Naive thymus-derived CD4-positive, alpha-beta T cell (primary cell): ENCODE measurements at regions of chr1 and their contacts with region 1.

Region 1: DNA sequence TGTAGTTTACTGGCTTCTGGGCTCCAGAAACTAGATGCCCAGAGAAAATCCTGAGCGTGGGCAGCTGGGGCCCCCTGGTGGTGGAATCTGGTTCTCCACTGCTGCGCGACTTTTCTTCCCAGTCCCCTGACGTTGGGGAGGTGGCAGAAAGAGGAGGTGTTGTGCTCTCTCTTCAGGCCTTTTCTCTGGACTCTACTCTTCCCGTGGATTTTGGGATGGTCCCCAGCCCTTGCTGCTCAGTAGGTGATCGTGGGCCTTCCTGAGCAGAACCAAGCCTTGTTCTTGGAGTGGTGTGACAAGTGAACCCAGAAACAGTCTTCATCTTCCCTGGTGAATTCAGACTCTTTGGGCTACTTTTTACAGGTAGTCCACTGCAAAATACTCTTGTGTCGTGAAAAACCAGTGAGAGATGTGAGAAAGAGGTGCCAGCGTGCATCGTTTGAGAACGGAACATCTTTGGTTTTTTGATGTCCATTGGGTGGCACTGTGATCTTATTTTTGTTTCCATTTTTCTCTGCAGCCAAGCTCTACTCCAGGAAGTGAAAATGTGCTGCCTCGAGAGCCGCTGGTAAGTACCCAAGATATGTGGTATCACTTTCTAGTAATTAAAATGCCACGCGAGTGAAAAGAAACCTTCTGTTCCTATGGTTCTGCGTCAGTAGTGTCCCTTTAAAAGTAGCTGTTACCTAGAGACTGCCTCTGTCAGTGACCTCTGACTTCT is 20.2 kb downstream of the PEX14 start:
- DNase-seq: peak; percentile 66 to 83 (median 76)
- ATAC-seq: peak; percentile 88
- H3K4me3 ChIP-seq: peak overlapping the region; percentile 94
- H3K4me3 Mint-ChIP-seq: peak overlapping the region; percentile 82 to 93 (median 88)
- H3K27ac ChIP-seq: peak overlapping the region; percentile 79
- H3K27ac Mint-ChIP-seq: peak overlapping the region; percentile 91 to 97 (median 96)
- H3K4me1 ChIP-seq: peaks cover 17 to 19% of the 10 kb centered on the region in 2 donors
- H3K4me1 Mint-ChIP-seq: peaks cover 30 to 58% (median 51%) of the 10 kb centered on the region in 7 donors
- H3K27me3 ChIP-seq: no peaks in the 10 kb centered on the region
- H3K27me3 Mint-ChIP-seq: no peaks in the 10 kb centered on the region

Region 2: DNA sequence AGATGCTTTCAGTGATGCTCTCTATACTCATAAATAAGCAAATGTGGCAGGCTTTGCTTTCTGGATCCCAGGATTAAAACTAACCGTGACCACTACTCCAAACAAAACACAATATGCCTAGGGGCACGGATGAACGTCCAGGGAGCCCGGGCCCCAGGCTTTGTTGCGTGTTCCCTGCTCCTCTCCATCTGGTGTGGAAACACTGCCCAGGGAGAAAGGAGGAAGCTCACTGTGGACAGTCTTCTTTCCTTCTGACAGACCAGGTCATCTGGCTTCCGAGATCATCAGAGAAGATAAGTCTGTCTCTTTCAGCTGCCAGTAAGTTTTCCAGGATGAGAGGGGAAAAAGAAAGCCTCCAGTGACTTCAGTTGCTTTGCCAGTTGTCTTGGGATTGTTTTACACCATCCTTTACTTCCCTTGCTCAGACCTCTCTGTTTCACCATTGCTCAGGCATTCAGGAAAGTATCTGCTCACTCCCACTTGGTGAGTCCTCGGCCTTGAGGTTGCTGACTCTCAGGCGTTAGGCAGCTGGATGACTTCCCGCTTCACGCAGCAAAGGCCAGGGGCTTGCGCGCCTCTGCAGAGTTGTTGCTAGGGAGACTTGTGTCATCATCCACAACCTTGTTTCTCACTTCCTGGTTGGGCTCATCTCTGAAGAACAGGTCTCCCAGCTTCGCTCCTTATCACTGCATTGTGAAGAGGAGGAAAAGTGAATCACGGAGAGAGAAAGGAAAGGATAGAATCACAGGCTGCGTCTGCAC is 116.7 kb before region 1 on chr1:
- CTCF ChIA-PET with region 1: no interaction called
- POLR2A ChIA-PET with region 1: no interaction called
- intact Hi-C with region 1: loop called in 1 of 2 experiments (anchors 1 kb)
- DNase-seq: no peak
- ATAC-seq: peak; percentile 83
- H3K4me3 ChIP-seq: no peak overlapping the region
- H3K4me3 Mint-ChIP-seq: no peak overlapping the region
- H3K27ac ChIP-seq: no peak overlapping the region
- H3K27ac Mint-ChIP-seq: peak overlapping the region in 1 of 9 donors; percentile 13
- H3K4me1 ChIP-seq: no peaks in the 10 kb centered on the region
- H3K4me1 Mint-ChIP-seq: peaks cover 0 to 5% (median 0%) of the 10 kb centered on the region in 7 donors
- H3K27me3 ChIP-seq: no peaks in the 10 kb centered on the region
- H3K27me3 Mint-ChIP-seq: no peaks in the 10 kb centered on the region

Region 3: DNA sequence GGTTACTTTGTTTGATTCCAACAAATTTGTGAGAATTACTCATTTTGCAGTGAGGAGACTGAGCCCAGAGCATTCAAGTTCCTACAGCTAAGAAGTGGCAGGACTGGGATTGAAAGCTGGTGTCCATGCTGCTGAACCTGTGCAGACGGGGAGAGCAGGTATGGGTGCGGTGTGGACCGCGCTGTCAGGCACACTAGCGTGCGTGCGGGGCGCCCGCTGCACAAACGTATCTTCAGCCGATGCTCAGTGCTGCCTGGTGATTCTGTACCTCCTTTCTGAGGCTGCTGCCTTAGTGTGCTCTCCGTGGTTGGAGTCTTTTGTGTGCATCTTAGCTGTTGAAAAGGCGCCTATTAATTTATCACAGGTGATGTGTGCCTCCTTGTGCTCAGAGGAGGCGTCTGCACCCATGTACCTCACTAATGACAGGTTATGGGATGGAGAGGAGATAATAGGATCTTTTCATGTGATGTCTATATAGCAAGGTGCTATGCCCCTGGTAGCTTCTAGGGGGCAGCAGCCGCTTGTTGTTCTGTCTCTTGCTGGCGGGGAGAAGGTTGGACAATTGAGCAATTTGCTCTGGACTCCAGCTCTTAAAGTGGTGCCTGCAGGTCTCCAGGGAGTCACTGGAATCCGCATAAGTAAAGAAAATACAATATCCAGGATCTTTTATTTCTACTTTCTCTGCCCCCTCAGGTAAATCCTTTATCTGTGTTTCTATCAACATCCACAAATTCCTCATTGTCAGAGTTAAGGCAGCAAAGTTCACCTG is 12.4 kb after region 1 on chr1:
- CTCF ChIA-PET with region 1: interaction called, 43 read pairs
- POLR2A ChIA-PET with region 1: interaction called, 20 read pairs
- intact Hi-C with region 1: loop called (anchors 1 kb)
- DNase-seq: peak in 7 of 9 donors; percentile 32 to 60 (median 55)
- ATAC-seq: peak; percentile 78
- H3K4me3 ChIP-seq: no peak overlapping the region
- H3K4me3 Mint-ChIP-seq: peak overlapping the region in 4 of 10 donors; percentile 7 to 66 (median 36)
- H3K27ac ChIP-seq: no peak overlapping the region
- H3K27ac Mint-ChIP-seq: peak overlapping the region; percentile 37 to 85 (median 57)
- H3K4me1 ChIP-seq: peaks cover 29 to 32% of the 10 kb centered on the region in 2 donors
- H3K4me1 Mint-ChIP-seq: peaks cover 38 to 76% (median 54%) of the 10 kb centered on the region in 7 donors
- H3K27me3 ChIP-seq: no peaks in the 10 kb centered on the region
- H3K27me3 Mint-ChIP-seq: no peaks in the 10 kb centered on the region

Region 4: GRCh38 chr1:10561955-10562354 is 67.0 kb after region 1 on chr1:
- CTCF ChIA-PET with region 1: interaction called, 5 read pairs
- POLR2A ChIA-PET with region 1: no interaction called
- intact Hi-C with region 1: loop called in 1 of 2 experiments (anchors 1 kb)
- DNase-seq: no peak
- ATAC-seq: no peak
- H3K4me3 ChIP-seq: no peak overlapping the region
- H3K4me3 Mint-ChIP-seq: no peak overlapping the region
- H3K27ac ChIP-seq: no peak overlapping the region
- H3K27ac Mint-ChIP-seq: peak overlapping the region in 1 of 9 donors; percentile 25
- H3K4me1 ChIP-seq: no peaks in the 10 kb centered on the region
- H3K4me1 Mint-ChIP-seq: peaks cover 0 to 29% (median 12%) of the 10 kb centered on the region in 7 donors
- H3K27me3 ChIP-seq: no peaks in the 10 kb centered on the region
- H3K27me3 Mint-ChIP-seq: no peaks in the 10 kb centered on the region

Region 5: GRCh38 chr1:10909697-10910671 is 415.1 kb after region 1 on chr1:
- CTCF ChIA-PET with region 1: interaction called, 16 read pairs
- POLR2A ChIA-PET with region 1: interaction called, 3 read pairs
- intact Hi-C with region 1: loop called in 1 of 2 experiments (anchors 1 kb)
- DNase-seq: peak; percentile 59 to 80 (median 69)
- ATAC-seq: peak; percentile 82
- H3K4me3 ChIP-seq: no peak overlapping the region
- H3K4me3 Mint-ChIP-seq: no peak overlapping the region
- H3K27ac ChIP-seq: no peak overlapping the region
- H3K27ac Mint-ChIP-seq: peak overlapping the region in 1 of 9 donors; percentile 25
- H3K4me1 ChIP-seq: peaks cover 4 to 19% of the 10 kb centered on the region in 2 donors
- H3K4me1 Mint-ChIP-seq: peaks cover 1 to 29% (median 16%) of the 10 kb centered on the region in 7 donors
- H3K27me3 ChIP-seq: no peaks in the 10 kb centered on the region
- H3K27me3 Mint-ChIP-seq: peaks cover 0 to 15% (median 0%) of the 10 kb centered on the region in 5 donors

Region 6: DNA sequence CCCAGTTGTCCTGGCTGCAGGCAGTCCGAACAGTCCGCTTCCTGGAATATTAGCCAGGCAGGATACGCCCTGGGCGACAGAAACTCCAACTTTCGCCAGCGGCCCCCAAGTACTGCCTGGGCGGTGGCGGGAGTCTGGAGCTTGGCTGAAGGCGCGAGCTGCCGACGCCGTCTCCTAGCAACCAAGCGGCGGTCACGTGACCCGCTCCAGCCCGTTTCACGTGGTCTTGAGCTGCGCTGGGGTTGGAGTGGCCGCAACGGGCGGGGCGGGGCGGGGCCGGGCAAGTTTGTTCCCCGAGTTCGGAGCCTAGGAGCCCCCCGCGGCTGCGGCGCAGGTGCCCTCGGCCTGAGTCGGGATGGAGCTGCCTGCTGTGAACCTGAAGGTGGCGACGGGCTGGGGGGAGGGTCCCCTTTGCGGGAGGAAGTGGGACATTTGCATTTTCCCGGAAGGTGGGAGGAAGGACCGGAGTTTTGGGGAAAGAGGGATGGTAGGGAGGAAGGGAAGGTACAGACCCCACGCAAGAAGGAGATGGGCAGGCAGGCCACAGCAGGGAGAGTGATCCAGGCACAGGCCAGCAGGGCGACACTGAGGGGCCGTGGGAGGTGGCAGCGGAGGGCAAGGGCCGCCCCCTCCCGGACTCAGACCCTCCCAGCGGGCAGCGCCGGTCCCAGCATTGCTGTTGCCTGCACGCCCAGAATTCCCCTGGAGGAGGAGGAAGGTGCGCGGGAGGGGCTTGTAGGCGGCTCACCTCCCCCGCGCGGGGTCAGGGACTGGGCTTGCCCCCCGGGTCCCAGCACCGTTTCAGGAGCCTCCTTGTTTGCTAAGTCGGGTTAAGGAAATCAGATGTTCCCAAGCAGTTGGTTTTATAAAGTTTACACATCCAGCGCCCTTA is 1241.2 kb after region 1 on chr1 and contains the start of gene AGTRAP:
- CTCF ChIA-PET with region 1: no interaction called
- POLR2A ChIA-PET with region 1: no interaction called
- intact Hi-C with region 1: no loop called
- DNase-seq: peak; percentile 62 to 84 (median 71)
- ATAC-seq: peak; percentile 78
- H3K4me3 ChIP-seq: peak within 1 kb of the TSS; percentile 92
- H3K4me3 Mint-ChIP-seq: peak within 1 kb of the TSS; percentile 84 to 96 (median 92)
- H3K27ac ChIP-seq: peak within 1 kb of the TSS; percentile 79
- H3K27ac Mint-ChIP-seq: peak within 1 kb of the TSS; percentile 3 to 95 (median 83)
- H3K4me1 ChIP-seq: peaks cover 38 to 52% of the 10 kb centered on the region in 2 donors
- H3K4me1 Mint-ChIP-seq: peaks cover 51 to 80% (median 76%) of the 10 kb centered on the region in 7 donors
- H3K27me3 ChIP-seq: no peaks in the 10 kb centered on the region
- H3K27me3 Mint-ChIP-seq: no peaks in the 10 kb centered on the region
- total RNA-seq, gene AGTRAP: 28.2 to 82.5 (median 32.7) TPM